ENCODE measurements at regions of chr1 and their contacts with region 1.

Region 1: DNA sequence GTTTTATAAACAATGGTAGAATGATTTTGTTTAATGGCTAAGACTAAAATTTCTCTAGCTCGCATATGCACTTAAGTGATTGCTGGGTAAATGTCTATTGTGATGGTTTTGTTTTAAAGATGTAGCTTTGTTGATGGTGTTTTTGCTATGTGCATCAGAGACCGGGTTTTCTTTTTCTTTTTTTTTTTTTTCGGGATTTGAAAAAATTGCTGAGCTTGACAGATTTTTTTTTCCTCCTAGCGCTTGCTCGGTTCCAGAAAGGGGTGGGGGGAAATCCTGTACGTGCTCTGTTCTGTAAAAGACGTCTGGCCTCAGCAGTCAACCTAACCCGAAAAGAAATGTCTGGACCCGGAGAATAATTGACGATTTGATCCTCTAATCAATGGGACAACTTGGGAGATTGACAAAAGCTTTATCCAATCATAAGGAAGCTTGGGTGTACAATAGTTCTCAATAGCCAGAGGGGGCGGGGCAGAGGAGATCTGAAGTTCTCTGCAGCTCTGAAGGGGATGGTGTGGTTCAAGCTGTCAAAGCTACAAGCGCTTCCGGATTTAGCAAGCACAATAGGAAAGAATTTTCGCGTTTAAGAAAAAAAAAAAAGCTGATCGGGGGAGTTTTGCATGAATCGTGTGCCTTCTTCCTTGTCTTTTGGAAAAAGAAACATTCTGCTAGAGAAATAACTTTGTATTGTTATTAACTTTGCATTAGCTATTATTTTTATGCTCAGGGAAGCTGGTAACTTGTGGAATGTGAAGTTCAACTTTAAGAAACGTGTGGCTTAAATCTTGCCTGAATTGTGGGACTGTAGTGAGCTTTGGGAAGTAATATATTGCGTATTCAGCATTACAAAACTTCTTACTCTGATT is 4.5 kb upstream of the NFIA start:
- DNase-seq: peak; percentile 91
- ATAC-seq: peak; percentile 80

Region 2: DNA sequence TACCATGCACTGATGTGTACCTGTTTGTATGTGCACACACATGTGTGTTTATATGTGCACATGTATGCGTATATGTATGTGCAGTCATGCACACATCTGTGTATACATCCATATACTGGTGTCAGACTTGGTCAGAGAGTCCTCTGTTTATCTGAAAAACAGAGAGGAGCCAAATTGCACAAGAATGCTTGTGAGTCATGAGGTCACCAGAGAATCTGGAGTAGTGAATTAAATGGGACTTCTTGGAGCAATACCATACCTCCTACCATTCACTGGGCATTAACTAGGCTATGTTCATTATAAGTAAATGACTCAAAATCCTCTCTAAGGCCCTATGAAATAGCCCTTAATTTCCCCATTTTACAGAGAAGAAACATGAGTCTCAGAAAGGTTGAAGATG is 732.3 kb before region 1 on chr1:
- intact Hi-C with region 1: no loop called
- DNase-seq: no peak
- ATAC-seq: no peak

Region 3: DNA sequence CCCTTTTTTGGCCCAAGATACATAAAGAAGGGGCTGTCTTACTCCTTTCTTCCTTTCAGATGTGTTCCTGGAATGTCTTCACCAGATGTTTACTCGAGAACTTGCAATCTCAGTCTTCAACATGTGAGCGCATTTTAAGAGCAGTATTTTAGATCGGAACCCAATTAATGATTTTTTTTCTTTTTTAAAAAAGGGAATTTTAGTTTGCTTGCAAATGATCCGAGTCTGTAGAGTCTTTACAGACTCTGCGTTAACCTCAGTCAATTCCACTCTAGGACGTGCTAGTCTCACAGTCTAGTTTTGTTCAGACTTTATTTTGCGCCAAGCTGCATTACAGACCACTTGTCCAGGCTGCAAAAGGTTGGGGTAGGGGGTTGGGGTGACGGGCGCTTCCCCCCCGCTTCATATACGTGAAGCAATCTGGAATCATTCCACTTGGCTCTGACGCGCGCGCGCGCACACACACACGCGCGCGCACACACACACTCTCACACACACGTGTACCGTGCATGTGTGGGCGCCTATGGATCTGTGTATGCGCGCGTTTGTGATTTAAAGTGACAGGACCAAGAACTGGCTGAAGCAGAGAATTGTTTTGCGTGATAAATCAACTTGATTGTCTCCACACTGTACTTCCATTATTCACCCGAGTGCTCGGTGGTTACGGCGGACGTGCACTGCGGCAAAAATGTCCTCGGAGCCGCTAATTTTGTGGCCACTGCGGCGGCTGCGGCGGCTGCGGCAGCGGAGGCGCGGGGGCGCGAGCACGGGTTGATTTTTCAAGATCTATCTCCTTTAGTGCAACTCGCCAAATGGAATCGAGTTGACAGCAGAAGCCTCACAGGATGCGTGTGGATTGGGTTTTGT is 21.1 kb before region 1 on chr1:
- intact Hi-C with region 1: loop called (anchors 1 kb)
- DNase-seq: peak; percentile 84
- ATAC-seq: peak; percentile 58

Region 4: GRCh38 chr1:61337981-61338848 is 260.3 kb after region 1 on chr1:
- intact Hi-C with region 1: loop called (anchors 10 kb)
- DNase-seq: peak; percentile 71
- ATAC-seq: peak; percentile 86

Region 5: DNA sequence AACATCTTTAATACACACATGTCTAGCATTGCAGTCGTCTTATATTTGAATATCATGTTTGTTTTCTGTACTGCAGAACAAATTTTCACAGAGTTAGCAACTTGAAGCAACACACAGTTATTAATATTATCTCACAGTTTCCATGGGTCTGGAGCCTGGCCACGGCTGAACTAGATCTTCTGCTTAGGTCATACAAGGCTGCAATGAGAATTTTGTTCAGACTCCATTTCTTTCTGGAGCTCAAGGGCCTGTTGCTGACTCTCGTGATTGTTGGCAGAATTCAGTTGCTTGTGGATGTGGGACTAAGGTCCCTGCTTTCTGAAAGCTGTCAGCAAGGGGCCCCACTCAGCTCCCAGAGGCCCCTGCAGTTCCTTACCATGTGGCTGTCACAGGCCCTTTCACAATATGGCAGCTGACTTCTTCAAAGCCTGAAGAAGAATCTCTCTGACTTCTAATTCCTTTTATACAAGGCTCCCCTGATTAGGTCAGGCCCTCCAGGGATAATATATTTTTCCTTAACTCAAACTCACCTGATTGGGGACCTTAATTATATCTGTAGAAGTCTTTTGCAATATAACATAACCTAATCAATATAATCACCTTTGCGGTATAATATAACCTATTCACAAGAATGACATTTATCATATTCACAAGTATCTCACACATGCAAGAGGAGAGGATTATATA is 300.7 kb after region 1 on chr1:
- intact Hi-C with region 1: no loop called
- DNase-seq: peak; percentile 33
- ATAC-seq: peak; percentile 28